ENCODE measurements at regions of chr5 and their contacts with region 1.

Region 1: DNA sequence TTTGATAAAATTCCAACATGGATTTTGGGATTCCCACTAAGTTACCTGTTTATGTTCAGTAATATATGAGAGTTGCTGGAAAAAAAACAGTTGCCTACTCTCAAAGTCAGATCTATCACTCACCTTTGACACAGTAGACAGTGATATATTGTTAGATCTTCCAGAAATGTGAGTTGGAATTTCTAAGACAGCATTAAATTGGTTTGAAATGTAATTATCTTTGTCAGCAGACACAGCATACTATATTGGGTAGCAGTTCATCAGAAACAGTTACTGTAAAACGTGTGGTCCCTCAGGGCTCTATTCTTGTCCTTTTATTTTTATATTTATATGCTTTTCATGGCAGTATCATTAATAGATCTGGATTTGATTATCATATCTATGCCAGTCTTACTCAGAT is 433.6 kb upstream of the ARRDC3 start:
- DNase-seq: no peak
- H3K4me3 ChIP-seq: no peak overlapping the region
- H3K27ac ChIP-seq: no peak overlapping the region
- H3K4me1 ChIP-seq: no peaks in the 10 kb centered on the region
- H3K27me3 ChIP-seq: no peaks in the 10 kb centered on the region
- CTCF ChIP-seq: no peak
- EP300 ChIP-seq: no peak
- POLR2A ChIP-seq: no peak

Region 2: GRCh38 chr5:89930591-89931392 is 1885.9 kb before region 1 on chr5:
- intact Hi-C with region 1: loop called in 1 of 4 experiments (anchors 10 kb)
- DNase-seq: no peak
- H3K4me3 ChIP-seq: no peak overlapping the region
- H3K27ac ChIP-seq: no peak overlapping the region
- H3K4me1 ChIP-seq: no peaks in the 10 kb centered on the region
- H3K27me3 ChIP-seq: no peaks in the 10 kb centered on the region
- CTCF ChIP-seq: no peak
- EP300 ChIP-seq: no peak
- POLR2A ChIP-seq: no peak

Region 3: GRCh38 chr5:91651703-91652102 is 165.0 kb before region 1 on chr5:
- intact Hi-C with region 1: no loop called
- DNase-seq: peak in 1 of 5 donors; percentile 6
- H3K4me3 ChIP-seq: no peak overlapping the region
- H3K27ac ChIP-seq: no peak overlapping the region
- H3K4me1 ChIP-seq: no peaks in the 10 kb centered on the region
- H3K27me3 ChIP-seq: no peaks in the 10 kb centered on the region
- CTCF ChIP-seq: no peak
- EP300 ChIP-seq: no peak
- POLR2A ChIP-seq: no peak